ENCODE measurements at regions of chr1 and their contacts with region 1.

Region 1: DNA sequence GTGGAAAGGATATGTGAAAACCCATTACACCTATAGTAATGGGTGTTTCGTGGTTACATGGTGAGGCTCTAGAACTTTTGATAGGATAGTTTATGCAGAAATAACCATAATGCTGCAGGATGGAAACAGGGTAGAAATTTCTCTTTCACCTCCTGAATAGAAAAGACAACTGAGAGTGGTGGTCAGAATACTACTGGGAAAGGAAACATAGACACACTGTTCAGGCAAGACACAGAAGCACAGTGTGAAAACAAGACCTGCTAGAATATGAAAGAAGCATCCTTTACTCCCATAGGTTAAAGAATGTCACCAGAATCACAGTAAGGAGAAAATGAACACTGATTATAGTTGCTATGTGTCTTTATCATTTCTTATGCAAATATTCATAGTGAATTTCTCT is 496.6 kb downstream of the DPYD start:
- DNase-seq: no peak
- ATAC-seq: no peak

Region 2: DNA sequence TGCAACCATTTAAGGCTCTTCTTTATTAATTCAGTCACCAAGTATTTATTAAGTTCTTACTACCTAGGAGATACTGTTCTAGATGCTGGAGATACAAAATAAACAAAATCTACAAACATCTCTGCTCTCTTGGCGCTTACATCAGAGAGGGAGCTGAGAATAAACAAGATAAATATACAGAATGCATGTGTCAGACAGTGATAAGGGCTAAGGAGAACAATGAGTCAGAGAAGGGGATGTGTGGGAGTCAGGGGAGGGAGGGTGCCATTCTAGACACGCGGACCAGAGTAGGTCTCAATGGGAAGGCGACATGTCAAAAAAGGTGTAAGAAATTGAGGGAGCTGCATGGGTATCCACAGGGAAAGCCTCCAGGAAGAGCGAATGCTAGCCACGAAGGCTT is 1797.0 kb before region 1 on chr1:
- intact Hi-C with region 1: no loop called
- DNase-seq: no peak
- ATAC-seq: no peak

Region 3: DNA sequence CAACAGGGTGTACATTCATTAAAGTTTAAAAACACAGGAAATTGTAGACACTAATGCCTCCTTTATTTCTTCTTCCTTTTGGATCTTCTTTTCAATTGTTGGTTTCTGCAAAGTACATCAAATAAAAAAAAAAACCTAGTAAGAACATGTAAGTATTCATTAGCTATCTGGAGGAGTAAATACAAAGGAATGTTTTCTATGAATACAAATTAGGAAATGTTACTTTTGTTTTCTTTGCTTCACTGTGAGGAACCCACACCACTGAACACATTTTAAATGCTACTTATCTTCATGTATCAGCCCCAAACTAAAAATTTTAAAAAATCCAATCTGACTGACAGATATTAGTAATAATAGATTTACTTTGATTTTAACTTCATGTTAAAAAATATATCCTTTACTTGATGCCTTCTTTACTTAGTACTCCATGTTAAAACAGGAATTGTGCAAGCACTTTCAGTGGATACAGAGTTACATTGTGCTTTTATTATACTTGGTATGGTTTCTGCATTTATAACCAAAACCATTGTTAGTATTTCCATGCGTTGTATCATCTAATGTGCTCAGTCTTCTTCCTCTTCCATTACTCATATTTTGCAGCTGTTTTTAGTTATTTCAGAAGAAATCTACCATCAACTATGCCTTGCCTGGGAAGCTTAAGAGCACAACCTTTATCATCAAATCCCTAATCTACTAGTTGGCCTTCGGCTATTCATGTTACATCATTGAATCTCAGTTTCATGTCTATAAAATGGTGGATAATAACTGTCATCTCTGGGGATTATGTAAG is 733.5 kb after region 1 on chr1:
- intact Hi-C with region 1: loop called (anchors 5 kb)
- DNase-seq: no peak
- ATAC-seq: no peak